ENCODE measurements at regions of chr15 and their contacts with region 1.

Region 1: DNA sequence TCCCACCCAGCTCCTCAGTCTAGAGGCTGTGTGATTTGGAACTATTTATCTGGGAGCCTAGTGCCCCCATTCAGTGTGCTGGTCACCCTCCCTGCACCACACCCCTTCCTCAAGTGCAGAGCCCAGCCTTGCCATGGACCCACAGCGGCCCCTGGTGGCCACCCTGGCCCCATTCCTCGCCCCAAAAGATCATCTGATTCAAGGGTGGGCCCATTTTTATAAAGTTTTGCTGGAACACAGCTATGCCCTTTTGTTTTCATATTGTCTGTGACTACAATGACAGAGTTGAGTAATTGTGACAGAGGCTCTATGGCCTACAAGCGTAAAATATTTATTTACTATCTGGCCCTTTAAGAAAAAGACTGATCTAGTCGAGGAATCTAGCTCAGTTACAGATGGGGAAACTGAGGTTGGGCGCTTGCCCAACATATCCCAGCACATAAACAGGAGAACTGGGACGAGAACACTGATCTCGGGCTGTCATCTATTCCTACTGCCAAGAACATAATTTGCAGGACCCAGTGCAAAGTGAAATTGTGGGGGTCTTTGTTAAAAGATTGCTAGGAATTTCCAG is 1.8 kb downstream of the FES start:
- DNase-seq: peak; percentile 65 to 69 (median 66)
- H3K4me3 ChIP-seq: no peak overlapping the region
- H3K4me3 Mint-ChIP-seq: peak overlapping the region in 2 of 8 donors; percentile 52 to 77
- H3K27ac ChIP-seq: no peak overlapping the region
- H3K27ac Mint-ChIP-seq: peak overlapping the region in 3 of 7 donors; percentile 30 to 72 (median 60)
- H3K4me1 ChIP-seq: peaks cover 5% of the 10 kb centered on the region
- H3K4me1 Mint-ChIP-seq: peaks cover 2 to 17% (median 8%) of the 10 kb centered on the region in 4 donors
- H3K27me3 ChIP-seq: no peaks in the 10 kb centered on the region
- H3K27me3 Mint-ChIP-seq: peaks cover 5 to 9% of the 10 kb centered on the region in 2 donors

Region 2: GRCh38 chr15:89625716-89626115 is 1260.4 kb before region 1 on chr15:
- CTCF ChIA-PET with region 1: no interaction called
- POLR2A ChIA-PET with region 1: no interaction called
- intact Hi-C with region 1: no loop called
- DNase-seq: no peak
- H3K4me3 ChIP-seq: no peak overlapping the region
- H3K4me3 Mint-ChIP-seq: no peak overlapping the region
- H3K27ac ChIP-seq: no peak overlapping the region
- H3K27ac Mint-ChIP-seq: peak overlapping the region in 1 of 7 donors; percentile 15
- H3K4me1 ChIP-seq: no peaks in the 10 kb centered on the region
- H3K4me1 Mint-ChIP-seq: no peaks in the 10 kb centered on the region
- H3K27me3 ChIP-seq: no peaks in the 10 kb centered on the region
- H3K27me3 Mint-ChIP-seq: no peaks in the 10 kb centered on the region

Region 3: DNA sequence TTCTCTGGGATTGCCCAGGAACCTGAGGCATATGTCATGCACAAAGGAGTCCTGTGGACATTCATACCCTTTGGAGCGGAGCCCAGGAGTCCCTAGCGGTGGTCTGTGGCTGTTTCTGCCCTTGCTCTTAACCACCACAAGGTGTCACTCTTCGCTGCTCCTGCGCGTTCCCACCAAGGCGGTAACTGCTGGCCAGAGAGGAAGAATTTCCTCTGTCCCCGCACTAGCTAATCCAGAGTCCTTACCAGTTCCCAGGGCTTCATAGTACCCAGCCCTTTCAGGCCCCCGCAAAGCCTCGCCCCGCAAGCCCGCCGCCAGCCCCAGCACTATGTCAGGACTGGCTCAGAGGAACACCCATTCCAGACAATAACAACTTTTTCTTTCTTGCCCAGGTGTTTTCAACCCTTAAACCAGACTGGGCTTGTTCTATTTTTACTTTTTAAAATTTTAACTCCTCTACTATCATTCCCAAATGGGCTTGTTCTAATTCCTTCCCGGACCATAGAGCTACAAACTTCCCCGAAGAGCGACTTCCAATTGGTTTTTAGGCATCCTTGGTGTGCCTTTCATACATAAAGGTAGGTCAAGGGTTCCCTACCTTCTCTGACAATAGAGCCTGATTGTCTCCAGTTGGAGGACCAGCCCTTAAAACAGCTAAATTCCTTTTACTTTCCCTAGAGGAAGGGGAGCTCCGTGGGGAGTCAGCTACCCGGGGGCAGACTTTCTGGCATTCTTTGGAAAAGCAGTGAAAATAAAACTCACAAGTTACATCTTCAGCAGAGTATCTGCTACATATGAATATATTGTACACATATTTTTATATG is 565.9 kb before region 1 on chr15:
- CTCF ChIA-PET with region 1: interaction called, 27 read pairs
- POLR2A ChIA-PET with region 1: no interaction called
- intact Hi-C with region 1: loop called (anchors 1 kb)
- DNase-seq: peak; percentile 64 to 71 (median 68)
- H3K4me3 ChIP-seq: no peak overlapping the region
- H3K4me3 Mint-ChIP-seq: peak overlapping the region in 2 of 8 donors; percentile 53 to 56
- H3K27ac ChIP-seq: no peak overlapping the region
- H3K27ac Mint-ChIP-seq: peak overlapping the region in 2 of 7 donors; percentile 53 to 73
- H3K4me1 ChIP-seq: peaks cover 7% of the 10 kb centered on the region
- H3K4me1 Mint-ChIP-seq: peaks cover 5 to 8% (median 7%) of the 10 kb centered on the region in 4 donors
- H3K27me3 ChIP-seq: no peaks in the 10 kb centered on the region
- H3K27me3 Mint-ChIP-seq: peaks cover 0 to 3% of the 10 kb centered on the region in 2 donors

Region 4: DNA sequence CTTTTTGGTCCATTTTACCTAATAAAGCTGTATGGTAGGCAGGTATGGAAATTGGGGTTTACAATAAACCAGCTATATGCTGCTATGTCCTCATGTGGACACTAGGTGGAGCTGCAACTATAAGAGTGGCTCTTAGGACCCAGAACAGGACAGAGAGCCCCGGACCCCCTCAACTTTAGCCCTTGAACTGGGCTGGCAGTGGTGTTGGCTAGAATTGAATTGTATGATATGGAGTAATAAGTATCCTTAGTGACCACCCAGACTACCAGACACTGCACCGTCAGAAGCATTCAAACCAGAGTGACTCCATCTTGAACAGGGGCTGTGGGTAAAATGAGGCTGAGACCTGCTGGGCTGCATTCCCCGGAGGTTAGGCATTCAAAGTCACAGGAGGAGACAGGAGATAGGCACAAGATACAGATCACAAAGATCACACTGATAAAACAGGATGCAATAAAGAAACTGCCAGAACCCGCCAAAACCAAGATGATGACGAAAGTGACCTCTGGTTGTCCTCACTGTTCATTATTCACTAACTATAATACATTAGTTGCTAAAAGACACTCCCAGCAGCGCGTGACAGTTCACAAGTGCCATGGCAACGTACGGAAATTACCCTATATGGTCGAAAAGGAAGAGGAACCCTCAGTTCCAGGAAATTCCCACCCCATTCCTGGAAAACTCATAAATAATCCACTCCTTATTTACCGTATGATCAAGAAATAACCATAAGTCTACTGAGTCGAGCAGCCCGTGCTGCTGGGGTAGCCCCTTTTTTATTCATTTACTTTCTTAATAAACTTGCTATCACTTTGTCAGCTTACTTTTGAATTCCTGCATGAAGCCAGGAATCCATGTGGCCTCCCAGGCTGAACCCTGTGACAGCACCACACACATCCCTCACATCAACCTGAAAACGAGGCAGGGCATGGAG is 237.7 kb before region 1 on chr15:
- CTCF ChIA-PET with region 1: interaction called, 118 read pairs
- POLR2A ChIA-PET with region 1: interaction called, 8 read pairs
- intact Hi-C with region 1: loop called (anchors 1 kb)
- DNase-seq: peak; percentile 59 to 75 (median 67)
- H3K4me3 ChIP-seq: no peak overlapping the region
- H3K4me3 Mint-ChIP-seq: peak overlapping the region in 7 of 8 donors; percentile 53 to 80 (median 73)
- H3K27ac ChIP-seq: no peak overlapping the region
- H3K27ac Mint-ChIP-seq: peak overlapping the region; percentile 28 to 83 (median 75)
- H3K4me1 ChIP-seq: peaks cover 20% of the 10 kb centered on the region
- H3K4me1 Mint-ChIP-seq: peaks cover 14 to 27% (median 21%) of the 10 kb centered on the region in 4 donors
- H3K27me3 ChIP-seq: no peaks in the 10 kb centered on the region
- H3K27me3 Mint-ChIP-seq: peaks cover 0 to 3% of the 10 kb centered on the region in 2 donors

Region 5: GRCh38 chr15:90701880-90702630 is 184.1 kb before region 1 on chr15:
- CTCF ChIA-PET with region 1: interaction called, 12 read pairs
- POLR2A ChIA-PET with region 1: no interaction called
- intact Hi-C with region 1: no loop called
- DNase-seq: no peak
- H3K4me3 ChIP-seq: no peak overlapping the region
- H3K4me3 Mint-ChIP-seq: no peak overlapping the region
- H3K27ac ChIP-seq: no peak overlapping the region
- H3K27ac Mint-ChIP-seq: peak overlapping the region in 1 of 7 donors; percentile 51
- H3K4me1 ChIP-seq: no peaks in the 10 kb centered on the region
- H3K4me1 Mint-ChIP-seq: no peaks in the 10 kb centered on the region
- H3K27me3 ChIP-seq: no peaks in the 10 kb centered on the region
- H3K27me3 Mint-ChIP-seq: no peaks in the 10 kb centered on the region

Region 6: GRCh38 chr15:90780916-90781315 is 105.2 kb before region 1 on chr15:
- CTCF ChIA-PET with region 1: interaction called, 11 read pairs
- POLR2A ChIA-PET with region 1: no interaction called
- intact Hi-C with region 1: no loop called
- DNase-seq: peak in 3 of 5 donors; percentile 5 to 22 (median 20)
- H3K4me3 ChIP-seq: no peak overlapping the region
- H3K4me3 Mint-ChIP-seq: peak overlapping the region in 6 of 8 donors; percentile 39 to 83 (median 55)
- H3K27ac ChIP-seq: no peak overlapping the region
- H3K27ac Mint-ChIP-seq: peak overlapping the region in 6 of 7 donors; percentile 43 to 90 (median 68)
- H3K4me1 ChIP-seq: peaks cover 14% of the 10 kb centered on the region
- H3K4me1 Mint-ChIP-seq: peaks cover 12 to 24% (median 15%) of the 10 kb centered on the region in 4 donors
- H3K27me3 ChIP-seq: no peaks in the 10 kb centered on the region
- H3K27me3 Mint-ChIP-seq: no peaks in the 10 kb centered on the region

Region 7: DNA sequence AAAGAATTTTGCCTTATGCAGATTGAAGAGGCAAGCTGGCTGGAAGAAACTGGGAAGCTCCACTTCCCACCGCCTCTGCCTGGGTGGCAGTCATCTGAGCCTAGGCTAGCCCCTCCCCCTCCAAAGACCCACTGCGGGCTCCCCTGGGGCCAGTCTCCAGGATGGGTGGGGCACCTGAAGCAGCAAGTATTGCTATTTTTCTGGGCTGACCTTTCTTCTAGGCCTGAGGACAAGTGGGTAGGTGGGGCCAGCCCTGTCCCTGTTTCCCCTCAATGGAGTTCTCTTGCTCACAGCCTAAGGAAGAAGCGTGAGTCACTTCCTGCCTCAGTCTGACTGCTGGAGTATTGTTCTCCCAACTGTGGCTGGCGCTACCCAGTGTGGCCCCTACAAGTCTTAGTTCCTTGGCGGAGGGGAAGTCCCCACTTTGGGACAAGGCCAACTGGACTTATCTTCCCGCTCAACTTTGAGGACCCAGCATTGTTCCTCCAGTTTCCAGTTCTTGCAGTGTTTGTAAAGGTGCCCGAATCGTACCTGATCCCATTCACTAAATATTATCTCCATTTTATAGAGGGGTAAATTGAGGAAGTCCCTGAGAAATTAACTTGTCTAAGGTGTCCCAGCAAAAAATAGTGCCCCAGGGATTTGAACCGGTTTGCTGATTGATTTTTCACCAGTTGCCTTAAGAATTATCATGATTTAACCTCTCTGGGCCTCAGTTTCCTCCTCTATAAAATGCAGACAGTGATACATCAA is 16.4 kb before region 1 on chr15:
- CTCF ChIA-PET with region 1: interaction called, 19 read pairs
- POLR2A ChIA-PET with region 1: interaction called, 3 read pairs
- intact Hi-C with region 1: no loop called
- DNase-seq: peak in 1 of 5 donors; percentile 69
- H3K4me3 ChIP-seq: peak overlapping the region in 1 of 2 donors; percentile 42
- H3K4me3 Mint-ChIP-seq: peak overlapping the region; percentile 84 to 96 (median 88)
- H3K27ac ChIP-seq: peak overlapping the region; percentile 68
- H3K27ac Mint-ChIP-seq: peak overlapping the region; percentile 92 to 98 (median 94)
- H3K4me1 ChIP-seq: peaks cover 46% of the 10 kb centered on the region
- H3K4me1 Mint-ChIP-seq: peaks cover 23 to 65% (median 40%) of the 10 kb centered on the region in 4 donors
- H3K27me3 ChIP-seq: no peaks in the 10 kb centered on the region
- H3K27me3 Mint-ChIP-seq: no peaks in the 10 kb centered on the region

Region 8: GRCh38 chr15:90915808-90916440 is 29.8 kb after region 1 on chr15:
- CTCF ChIA-PET with region 1: no interaction called
- POLR2A ChIA-PET with region 1: no interaction called
- intact Hi-C with region 1: no loop called
- DNase-seq: no peak
- H3K4me3 ChIP-seq: no peak overlapping the region
- H3K4me3 Mint-ChIP-seq: no peak overlapping the region
- H3K27ac ChIP-seq: no peak overlapping the region
- H3K27ac Mint-ChIP-seq: peak overlapping the region in 1 of 7 donors; percentile 68
- H3K4me1 ChIP-seq: no peaks in the 10 kb centered on the region
- H3K4me1 Mint-ChIP-seq: no peaks in the 10 kb centered on the region
- H3K27me3 ChIP-seq: no peaks in the 10 kb centered on the region
- H3K27me3 Mint-ChIP-seq: no peaks in the 10 kb centered on the region

Region 9: DNA sequence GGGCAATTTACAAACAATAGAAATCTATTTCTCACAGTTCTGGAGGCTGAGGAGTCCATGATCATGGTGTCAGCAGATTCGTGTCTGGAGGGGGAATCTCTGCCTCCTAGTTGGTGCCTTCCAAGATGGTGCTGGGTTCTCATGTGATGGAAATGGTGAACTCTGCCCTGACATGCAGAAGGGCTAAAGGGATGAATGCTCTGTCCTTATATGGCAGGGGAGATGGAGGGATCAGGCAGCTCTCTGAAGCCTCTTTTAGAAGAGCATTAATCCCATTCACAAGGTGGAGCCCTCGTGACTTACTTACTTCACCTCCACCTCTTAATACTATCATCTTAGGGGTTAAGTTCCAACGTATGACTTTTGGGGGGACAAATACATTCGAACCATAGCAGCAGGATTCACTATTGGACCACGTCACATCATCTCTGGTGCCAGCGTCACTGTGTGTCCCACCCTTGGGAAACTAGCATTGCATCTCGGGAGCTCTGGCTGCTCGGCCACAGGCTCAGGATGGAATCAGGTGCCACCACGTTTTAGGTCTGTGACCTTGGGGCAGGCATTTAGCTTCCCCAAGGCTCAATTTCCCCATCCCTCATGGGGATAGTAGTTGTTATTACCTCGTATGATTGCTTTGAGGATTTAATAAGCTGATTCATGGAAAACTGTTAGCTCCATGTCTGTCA is 266.9 kb after region 1 on chr15:
- CTCF ChIA-PET with region 1: no interaction called
- POLR2A ChIA-PET with region 1: no interaction called
- intact Hi-C with region 1: no loop called
- DNase-seq: no peak
- H3K4me3 ChIP-seq: no peak overlapping the region
- H3K4me3 Mint-ChIP-seq: no peak overlapping the region
- H3K27ac ChIP-seq: no peak overlapping the region
- H3K27ac Mint-ChIP-seq: no peak overlapping the region
- H3K4me1 ChIP-seq: no peaks in the 10 kb centered on the region
- H3K4me1 Mint-ChIP-seq: no peaks in the 10 kb centered on the region
- H3K27me3 ChIP-seq: peaks cover 7% of the 10 kb centered on the region
- H3K27me3 Mint-ChIP-seq: peaks cover 27 to 56% of the 10 kb centered on the region in 2 donors